ENCODE measurements at regions of chr9 and their contacts with region 1.

Region 1: DNA sequence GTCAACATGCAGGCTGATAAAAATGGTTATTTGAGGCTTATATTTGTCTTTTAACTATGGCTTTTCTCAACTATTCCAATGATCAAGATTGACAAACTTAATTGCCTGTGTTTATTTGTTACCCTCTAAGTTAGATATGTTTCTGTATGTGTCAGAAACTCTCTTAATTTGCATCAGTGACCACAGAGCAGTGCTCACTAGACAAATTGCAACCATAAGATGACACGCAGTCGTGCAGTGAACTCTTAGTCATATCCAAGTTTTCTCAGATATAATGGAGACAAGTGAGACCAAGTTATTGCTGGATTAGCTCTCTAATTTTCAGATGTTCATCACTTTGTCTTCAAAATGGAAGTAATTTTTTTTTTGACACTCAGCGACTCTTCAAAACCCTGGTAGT is 342.2 kb upstream of the RFX3 start:
- DNase-seq: peak; percentile 35
- H3K4me3 Mint-ChIP-seq: no peak overlapping the region
- H3K27ac Mint-ChIP-seq: no peak overlapping the region
- H3K4me1 Mint-ChIP-seq: peaks cover 8% of the 10 kb centered on the region
- H3K27me3 Mint-ChIP-seq: peaks cover 9% of the 10 kb centered on the region

Region 2: DNA sequence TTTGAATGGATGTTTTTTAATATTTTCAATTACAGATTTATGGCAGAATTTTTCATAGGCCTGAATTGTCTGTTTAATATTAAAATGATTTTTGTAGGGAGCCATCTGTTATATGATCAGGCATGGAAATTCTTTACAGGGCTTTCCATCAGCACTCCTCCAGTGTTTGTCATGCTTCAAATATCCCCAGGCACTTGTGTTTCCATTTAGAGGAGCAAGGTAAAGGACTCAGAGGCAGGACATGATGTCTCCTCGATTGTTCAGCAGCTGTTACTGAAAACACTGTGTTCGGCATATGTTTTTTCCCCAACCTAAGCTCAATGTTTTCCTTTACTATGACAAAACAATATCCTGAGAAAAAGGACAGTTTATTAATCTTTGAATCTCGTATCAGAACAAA is 169.9 kb before region 1 on chr9:
- CTCF ChIA-PET with region 1: no interaction called
- intact Hi-C with region 1: no loop called
- DNase-seq: no peak
- H3K4me3 Mint-ChIP-seq: no peak overlapping the region
- H3K27ac Mint-ChIP-seq: no peak overlapping the region
- H3K4me1 Mint-ChIP-seq: no peaks in the 10 kb centered on the region
- H3K27me3 Mint-ChIP-seq: peaks cover 26% of the 10 kb centered on the region

Region 3: GRCh38 chr9:3857673-3858072 is 10.3 kb before region 1 on chr9:
- CTCF ChIA-PET with region 1: no interaction called
- intact Hi-C with region 1: no loop called
- DNase-seq: no peak
- H3K4me3 Mint-ChIP-seq: no peak overlapping the region
- H3K27ac Mint-ChIP-seq: no peak overlapping the region
- H3K4me1 Mint-ChIP-seq: no peaks in the 10 kb centered on the region
- H3K27me3 Mint-ChIP-seq: peaks cover 3% of the 10 kb centered on the region

Region 4: DNA sequence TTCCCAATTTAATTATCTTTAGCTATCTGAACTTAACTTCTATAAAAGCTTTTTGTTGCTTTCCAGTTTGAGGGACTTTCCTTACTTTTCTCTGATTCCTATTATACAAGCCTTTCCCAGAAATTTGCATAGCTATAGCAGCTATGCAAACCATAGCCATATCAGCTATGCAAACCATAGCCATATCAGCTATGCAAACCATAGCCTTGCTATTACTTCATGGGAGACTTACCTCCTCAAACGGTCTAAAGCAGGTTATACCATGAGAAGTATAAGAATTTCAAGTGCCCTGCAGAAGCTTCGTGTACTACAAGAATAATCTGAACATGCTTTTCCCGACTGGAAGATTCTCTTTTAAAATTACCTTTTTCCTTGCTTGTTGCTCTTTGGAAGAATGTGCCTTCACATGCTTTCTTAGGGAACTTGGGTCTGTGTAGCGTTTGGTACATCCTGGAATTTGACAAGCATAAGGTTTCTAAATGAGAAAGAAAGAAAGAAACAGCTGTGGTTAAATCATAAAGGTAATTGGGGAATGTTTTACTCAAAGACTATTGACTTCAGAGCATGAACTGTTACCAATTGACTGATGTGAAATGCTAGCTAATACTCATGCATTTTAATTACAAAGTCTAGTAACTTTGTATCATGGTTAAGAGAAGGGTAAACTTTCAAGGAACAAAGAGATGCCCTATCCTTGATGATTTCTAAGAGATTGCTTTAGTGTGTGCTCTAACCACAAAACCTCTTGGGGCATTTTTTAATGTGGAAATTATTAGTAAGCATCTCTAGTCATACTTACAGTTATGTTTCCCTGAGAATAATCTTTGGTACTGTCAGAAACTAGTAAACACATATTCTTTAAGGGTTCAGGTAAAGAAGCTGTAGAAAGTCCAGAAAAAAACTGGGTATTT is 64.2 kb after region 1 on chr9:
- CTCF ChIA-PET with region 1: no interaction called
- intact Hi-C with region 1: loop called (anchors 5 kb)
- DNase-seq: no peak
- H3K4me3 Mint-ChIP-seq: no peak overlapping the region
- H3K27ac Mint-ChIP-seq: peak overlapping the region; percentile 73
- H3K4me1 Mint-ChIP-seq: peaks cover 22% of the 10 kb centered on the region
- H3K27me3 Mint-ChIP-seq: peaks cover 2% of the 10 kb centered on the region